Gastrocnemius medialis (tissue), 4 donors: ENCODE measurements at regions of chr20 and their contacts with region 1.

Region 1: GRCh38 chr20:46307139-46307998 is 929 bp downstream of the CDH22 start:
- DNase-seq: peak; percentile 17 to 29
- ATAC-seq: peak; percentile 61 to 66
- H3K4me3 ChIP-seq: peak overlapping the region; percentile 39 to 57 (median 45)
- H3K27ac ChIP-seq: no peak overlapping the region
- H3K4me1 ChIP-seq: peaks cover 3 to 6% of the 10 kb centered on the region in 2 donors
- H3K27me3 ChIP-seq: peaks cover 55 to 66% (median 56%) of the 10 kb centered on the region in 3 donors
- CTCF ChIP-seq: peak; percentile 71 to 90 (median 77)
- POLR2A ChIP-seq: no peak

Region 2: GRCh38 chr20:46132705-46133120 is 174.7 kb before region 1 on chr20:
- in situ Hi-C with region 1: no loop called
- intact Hi-C with region 1: loop called (anchors 2 kb)
- DNase-seq: peak; percentile 46 to 50
- ATAC-seq: peak; percentile 56 to 82
- H3K4me3 ChIP-seq: no peak overlapping the region
- H3K27ac ChIP-seq: no peak overlapping the region
- H3K4me1 ChIP-seq: peaks cover 5 to 7% of the 10 kb centered on the region in 2 donors
- H3K27me3 ChIP-seq: no peaks in the 10 kb centered on the region
- CTCF ChIP-seq: peak; percentile 79 to 87 (median 84)
- POLR2A ChIP-seq: no peak

Region 3: DNA sequence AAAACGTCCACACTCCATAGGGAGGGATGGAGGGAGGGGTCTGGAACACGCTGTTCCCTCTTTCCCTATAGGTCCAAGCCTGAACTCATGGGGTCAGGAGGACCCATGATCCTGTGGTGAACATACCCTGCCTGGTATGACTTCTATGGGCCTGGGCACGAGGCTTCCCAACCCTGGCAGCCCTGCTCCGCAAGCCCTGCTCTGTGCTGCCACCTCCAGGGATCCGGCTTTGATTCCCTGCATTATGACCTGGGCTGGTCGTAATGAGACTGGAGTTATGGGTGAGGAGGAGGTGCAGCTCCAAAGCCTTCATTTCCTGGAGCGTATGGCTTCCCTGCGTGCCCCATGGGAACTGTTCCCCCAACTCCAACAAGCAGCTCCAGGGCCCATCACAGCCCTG is 54.0 kb before region 1 on chr20:
- in situ Hi-C with region 1: no loop called
- intact Hi-C with region 1: no loop called
- DNase-seq: peak; percentile 24 to 60
- ATAC-seq: peak; percentile 71 to 79
- H3K4me3 ChIP-seq: no peak overlapping the region
- H3K27ac ChIP-seq: no peak overlapping the region
- H3K4me1 ChIP-seq: no peaks in the 10 kb centered on the region
- H3K27me3 ChIP-seq: peaks cover 27 to 36% (median 31%) of the 10 kb centered on the region in 3 donors
- CTCF ChIP-seq: peak in 3 of 5 experiments; percentile 26 to 53 (median 47)
- POLR2A ChIP-seq: no peak